ENCODE measurements at regions of chr16 and their contacts with region 1.

Region 1: DNA sequence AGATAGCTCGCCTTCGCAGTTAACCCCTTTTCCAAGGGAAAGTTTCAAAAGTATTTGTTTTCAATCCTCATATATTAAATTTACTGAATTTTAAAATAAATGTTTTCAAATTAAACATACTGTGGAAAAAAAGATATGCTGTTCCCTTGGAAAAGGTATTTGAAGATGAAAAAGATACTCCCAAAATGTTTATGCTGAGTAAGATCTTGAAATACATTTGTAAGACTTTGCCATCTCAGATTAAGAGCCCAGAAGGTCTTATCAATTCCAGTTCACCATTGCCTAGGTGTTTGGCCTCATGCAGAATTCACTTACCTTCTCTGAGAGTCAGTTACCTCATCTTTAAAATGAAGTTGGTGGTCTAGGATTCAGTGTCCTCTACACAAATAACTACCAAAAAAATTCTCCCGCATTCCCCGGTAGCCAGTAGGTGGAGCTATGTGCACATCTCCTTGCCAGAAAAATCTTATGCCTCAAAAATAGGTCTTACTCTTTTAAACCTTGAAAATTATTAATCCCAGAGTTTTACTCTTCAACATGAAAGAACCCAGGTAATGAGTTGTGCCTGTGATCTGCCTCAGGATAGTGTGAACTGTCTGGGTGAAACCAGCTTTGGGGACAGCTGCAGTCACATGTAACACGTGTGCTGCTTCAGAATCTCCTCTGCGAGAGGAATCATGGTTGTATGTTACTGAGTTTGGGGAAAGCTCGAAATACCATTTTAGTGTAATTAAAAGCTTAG is 178.3 kb downstream of the MRTFB start:
- DNase-seq: peak; percentile 25 to 65 (median 35)
- H3K4me3 ChIP-seq: no peak overlapping the region
- H3K27ac ChIP-seq: no peak overlapping the region
- H3K4me1 ChIP-seq: no peaks in the 10 kb centered on the region
- H3K27me3 ChIP-seq: no peaks in the 10 kb centered on the region
- CTCF ChIP-seq: peak; percentile 50 to 62 (median 56)
- EP300 ChIP-seq: no peak
- POLR2A ChIP-seq: no peak

Region 2: DNA sequence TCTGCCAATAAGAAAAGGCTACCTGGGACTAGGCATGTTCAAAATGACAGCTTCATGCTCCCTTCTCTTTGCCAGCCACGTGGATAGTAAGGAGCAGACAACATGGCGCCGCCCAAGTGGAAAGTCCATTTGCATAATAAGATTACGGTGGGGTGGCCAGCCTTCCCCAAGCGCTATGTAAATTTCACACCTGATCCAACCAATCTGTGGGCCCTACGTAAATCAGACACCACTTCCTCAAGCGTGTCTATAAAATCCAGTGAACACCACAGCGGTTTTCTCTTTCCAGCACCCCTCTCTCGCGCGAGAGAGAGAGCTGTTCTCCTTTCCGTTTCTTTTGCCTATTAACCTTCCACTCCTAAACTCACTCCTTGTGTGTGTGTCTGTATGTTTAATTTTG is 469.8 kb before region 1 on chr16:
- intact Hi-C with region 1: no loop called
- DNase-seq: no peak
- H3K4me3 ChIP-seq: no peak overlapping the region
- H3K27ac ChIP-seq: no peak overlapping the region
- H3K4me1 ChIP-seq: no peaks in the 10 kb centered on the region
- H3K27me3 ChIP-seq: no peaks in the 10 kb centered on the region
- CTCF ChIP-seq: no peak
- EP300 ChIP-seq: no peak
- POLR2A ChIP-seq: no peak

Region 3: GRCh38 chr16:13909872-13910303 is 339.6 kb before region 1 on chr16:
- intact Hi-C with region 1: no loop called
- DNase-seq: peak; percentile 44 to 86 (median 75)
- H3K4me3 ChIP-seq: no peak overlapping the region
- H3K27ac ChIP-seq: peak overlapping the region in 1 of 2 donors; percentile 48
- H3K4me1 ChIP-seq: peaks cover 14% of the 10 kb centered on the region
- H3K27me3 ChIP-seq: no peaks in the 10 kb centered on the region
- CTCF ChIP-seq: no peak
- EP300 ChIP-seq: no peak
- POLR2A ChIP-seq: no peak

Region 4: GRCh38 chr16:14539631-14540030 is 290.2 kb after region 1 on chr16:
- intact Hi-C with region 1: loop called in 1 of 4 experiments (anchors 10 kb)
- DNase-seq: no peak
- H3K4me3 ChIP-seq: no peak overlapping the region
- H3K27ac ChIP-seq: no peak overlapping the region
- H3K4me1 ChIP-seq: no peaks in the 10 kb centered on the region
- H3K27me3 ChIP-seq: no peaks in the 10 kb centered on the region
- CTCF ChIP-seq: no peak
- EP300 ChIP-seq: no peak
- POLR2A ChIP-seq: no peak

Region 5: GRCh38 chr16:14600164-14600563 is 350.7 kb after region 1 on chr16:
- intact Hi-C with region 1: loop called in 1 of 4 experiments (anchors 5 kb)
- DNase-seq: no peak
- H3K4me3 ChIP-seq: no peak overlapping the region
- H3K27ac ChIP-seq: no peak overlapping the region
- H3K4me1 ChIP-seq: no peaks in the 10 kb centered on the region
- H3K27me3 ChIP-seq: no peaks in the 10 kb centered on the region
- CTCF ChIP-seq: peak in 1 of 3 donors; percentile 29
- EP300 ChIP-seq: no peak
- POLR2A ChIP-seq: no peak

Measured in ovary (tissue), 10 donors.